AG04450 (cell line): ENCODE measurements at regions of chr17 and their contacts with region 1.

Region 1: GRCh38 chr17:57946798-57947358 is 8.3 kb downstream of the CUEDC1 start:
- DNase-seq: peak; percentile 55
- H3K4me3 ChIP-seq: peak overlapping the region; percentile 53
- H3K27ac ChIP-seq: peak overlapping the region; percentile 81
- H3K27me3 ChIP-seq: no peaks in the 10 kb centered on the region
- CTCF ChIP-seq: no peak

Region 2: DNA sequence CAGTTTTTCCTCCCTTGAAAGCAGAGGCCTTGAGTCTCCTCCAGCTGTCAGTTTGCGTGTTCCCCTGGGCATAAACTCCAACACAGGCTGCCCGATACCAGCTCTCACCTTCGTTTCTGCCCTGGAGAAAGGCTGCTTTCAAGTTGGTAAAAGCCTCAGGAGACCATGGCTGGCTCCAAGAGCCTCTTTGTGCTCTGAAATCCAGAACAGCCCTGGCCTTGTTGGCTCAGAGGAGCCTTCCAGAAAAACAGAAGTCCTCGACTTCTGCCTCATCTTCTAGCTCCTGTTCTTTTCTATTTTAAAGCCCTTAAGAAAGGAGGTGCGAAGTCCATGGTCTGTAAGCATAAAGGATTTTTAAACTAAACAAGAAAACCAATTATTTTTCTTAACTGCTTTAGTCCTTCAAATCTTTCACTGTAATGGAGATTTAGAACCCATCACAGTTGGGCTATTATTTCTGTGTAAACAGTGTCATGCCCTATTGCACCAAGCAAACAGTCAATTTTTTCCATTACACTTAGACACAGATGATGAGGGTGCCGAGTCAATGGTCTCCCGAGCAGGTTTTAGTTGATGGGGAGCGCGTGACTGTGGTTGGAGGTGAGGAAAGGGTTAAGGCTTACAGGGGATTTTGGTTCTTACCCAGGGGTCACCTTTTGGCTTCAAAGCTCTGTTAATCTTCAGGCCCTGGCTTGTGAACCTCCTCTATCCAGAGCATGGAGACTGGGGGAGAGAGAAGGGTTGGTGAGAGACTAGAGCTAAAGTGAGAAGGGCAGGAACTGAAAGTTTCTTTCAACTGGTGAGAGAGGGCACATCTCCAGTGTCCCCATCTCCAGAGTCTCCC is 477.7 kb before region 1 on chr17:
- CTCF ChIA-PET with region 1: no interaction called
- POLR2A ChIA-PET with region 1: interaction called, 10 read pairs
- DNase-seq: no peak
- H3K4me3 ChIP-seq: no peak overlapping the region
- H3K27ac ChIP-seq: no peak overlapping the region
- H3K27me3 ChIP-seq: no peaks in the 10 kb centered on the region
- CTCF ChIP-seq: no peak

Region 3: GRCh38 chr17:57636985-57637665 is 309.8 kb before region 1 on chr17:
- CTCF ChIA-PET with region 1: no interaction called
- POLR2A ChIA-PET with region 1: no interaction called
- DNase-seq: no peak
- H3K4me3 ChIP-seq: no peak overlapping the region
- H3K27ac ChIP-seq: peak overlapping the region; percentile 11
- H3K27me3 ChIP-seq: no peaks in the 10 kb centered on the region
- CTCF ChIP-seq: no peak

Region 4: GRCh38 chr17:57868007-57868909 is 78.6 kb before region 1 on chr17:
- CTCF ChIA-PET with region 1: interaction called, 3 read pairs
- POLR2A ChIA-PET with region 1: interaction called, 11 read pairs
- DNase-seq: peak; percentile 71
- H3K4me3 ChIP-seq: peak overlapping the region; percentile 25; the same call in 1 of the 2 replicates
- H3K27ac ChIP-seq: peak overlapping the region; percentile 99
- H3K27me3 ChIP-seq: no peaks in the 10 kb centered on the region
- CTCF ChIP-seq: peak; percentile 58

Region 5: DNA sequence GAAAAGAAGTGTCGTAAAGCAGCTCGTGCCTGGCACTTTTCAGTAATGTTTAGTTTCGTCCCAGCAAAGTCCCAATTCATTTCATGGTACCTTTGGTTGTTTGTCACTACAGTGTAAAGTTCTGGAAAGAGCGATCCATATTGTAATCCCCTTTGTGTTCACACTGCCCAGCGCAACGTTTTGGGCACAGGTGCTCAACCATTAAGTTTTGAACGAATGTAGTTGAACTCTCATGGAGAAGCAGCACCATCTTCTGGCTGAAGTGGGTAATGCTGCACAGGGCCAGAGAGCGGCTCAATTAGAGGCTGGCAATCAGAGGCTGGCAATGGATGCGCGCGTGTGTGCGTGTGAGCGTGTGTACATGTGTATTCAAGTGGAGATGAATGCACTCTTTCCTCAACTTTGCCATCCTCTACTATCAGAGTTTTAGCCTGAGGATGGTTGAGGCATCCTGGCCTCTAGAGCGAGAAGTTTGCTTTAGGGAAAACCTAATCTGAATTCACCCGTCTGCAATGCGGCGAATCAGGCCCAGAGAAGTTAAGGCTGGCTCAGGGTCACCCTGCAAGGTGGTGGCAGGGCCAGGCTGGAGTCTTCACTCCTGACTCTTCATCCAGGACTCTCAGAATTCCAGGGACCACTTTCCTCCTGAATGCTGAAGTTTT is 166.2 kb after region 1 on chr17:
- CTCF ChIA-PET with region 1: no interaction called
- POLR2A ChIA-PET with region 1: no interaction called
- DNase-seq: no peak
- H3K4me3 ChIP-seq: no peak overlapping the region
- H3K27ac ChIP-seq: peak overlapping the region; percentile 11
- H3K27me3 ChIP-seq: peaks cover 9% of the 10 kb centered on the region
- CTCF ChIP-seq: peak; percentile 96